Common myeloid progenitor, CD34-positive (primary cell): ENCODE measurements at regions of chr6 and their contacts with region 1.

Region 1: DNA sequence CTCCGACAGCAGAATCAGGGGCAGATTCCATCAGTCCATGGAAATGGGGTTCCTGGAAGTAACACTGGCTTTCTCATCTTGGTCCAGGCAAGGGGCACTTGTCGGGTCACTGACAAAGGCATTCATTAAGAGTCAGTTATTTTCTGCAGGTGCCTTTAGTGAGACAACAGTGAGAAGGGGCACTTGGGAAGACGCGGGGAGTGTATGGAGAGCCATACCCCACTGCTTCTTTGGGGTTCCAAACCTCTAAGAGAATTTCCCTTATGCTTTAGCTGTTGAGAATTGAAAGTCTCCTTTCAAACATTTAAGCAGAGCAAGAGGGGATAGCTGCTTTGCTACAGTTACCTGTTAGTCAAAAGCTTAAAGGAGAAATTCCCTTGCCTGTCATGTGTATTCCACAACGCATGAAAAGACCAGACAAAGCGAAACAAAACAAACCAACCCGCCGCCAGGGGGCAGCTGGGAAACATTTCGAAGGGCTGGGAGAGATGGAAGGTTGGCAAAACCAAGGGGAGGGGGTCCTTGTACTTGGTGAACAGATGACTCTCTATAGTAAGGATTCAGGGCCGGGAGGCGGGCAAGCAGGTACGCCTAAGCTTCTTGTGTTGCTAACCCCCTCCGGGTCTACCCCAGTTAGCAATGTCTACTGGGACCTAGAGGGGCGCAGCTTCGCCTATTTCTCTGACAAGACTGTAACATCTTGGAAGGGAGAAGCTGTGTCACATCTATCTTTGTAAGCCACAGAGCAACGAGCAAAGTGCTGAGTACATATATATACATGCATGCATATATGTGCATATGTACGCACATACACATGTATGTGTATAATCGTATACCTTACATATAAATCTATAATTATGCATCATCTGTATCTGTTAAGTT is 474.9 kb upstream of the AGPAT4 start:
- DNase-seq: peak; percentile 70 to 81 (median 73)
- H3K4me3 ChIP-seq: peak overlapping the region in 2 of 7 experiments; percentile 12
- H3K27ac ChIP-seq: peak overlapping the region in 1 of 2 experiments; percentile 7
- H3K4me1 ChIP-seq: peaks cover 0 to 9% (median 2%) of the 10 kb centered on the region in 4 experiments
- H3K27me3 ChIP-seq: no peaks in the 10 kb centered on the region

Region 2: GRCh38 chr6:161418463-161418945 is 330.3 kb before region 1 on chr6:
- CTCF ChIA-PET with region 1: no interaction called
- POLR2A ChIA-PET with region 1: no interaction called
- DNase-seq: peak; percentile 61 to 78 (median 70)
- H3K4me3 ChIP-seq: no peak overlapping the region
- H3K27ac ChIP-seq: no peak overlapping the region
- H3K4me1 ChIP-seq: no peaks in the 10 kb centered on the region
- H3K27me3 ChIP-seq: peaks cover 0 to 10% (median 0%) of the 10 kb centered on the region in 5 experiments

Region 3: GRCh38 chr6:161829291-161829729 is 80.5 kb after region 1 on chr6:
- CTCF ChIA-PET with region 1: interaction called, 12 read pairs
- POLR2A ChIA-PET with region 1: no interaction called
- DNase-seq: peak; percentile 92 to 99 (median 97)
- H3K4me3 ChIP-seq: peak overlapping the region in 1 of 7 experiments; percentile 27
- H3K27ac ChIP-seq: peak overlapping the region; percentile 73 to 93
- H3K4me1 ChIP-seq: peaks cover 13 to 52% (median 45%) of the 10 kb centered on the region in 4 experiments
- H3K27me3 ChIP-seq: no peaks in the 10 kb centered on the region

Region 4: GRCh38 chr6:161836643-161837448 is 88.1 kb after region 1 on chr6:
- CTCF ChIA-PET with region 1: interaction called, 16 read pairs
- POLR2A ChIA-PET with region 1: no interaction called
- DNase-seq: peak in 2 of 3 donors; percentile 47 to 48
- H3K4me3 ChIP-seq: no peak overlapping the region
- H3K27ac ChIP-seq: no peak overlapping the region
- H3K4me1 ChIP-seq: peaks cover 15 to 45% (median 35%) of the 10 kb centered on the region in 4 experiments
- H3K27me3 ChIP-seq: no peaks in the 10 kb centered on the region

Region 5: DNA sequence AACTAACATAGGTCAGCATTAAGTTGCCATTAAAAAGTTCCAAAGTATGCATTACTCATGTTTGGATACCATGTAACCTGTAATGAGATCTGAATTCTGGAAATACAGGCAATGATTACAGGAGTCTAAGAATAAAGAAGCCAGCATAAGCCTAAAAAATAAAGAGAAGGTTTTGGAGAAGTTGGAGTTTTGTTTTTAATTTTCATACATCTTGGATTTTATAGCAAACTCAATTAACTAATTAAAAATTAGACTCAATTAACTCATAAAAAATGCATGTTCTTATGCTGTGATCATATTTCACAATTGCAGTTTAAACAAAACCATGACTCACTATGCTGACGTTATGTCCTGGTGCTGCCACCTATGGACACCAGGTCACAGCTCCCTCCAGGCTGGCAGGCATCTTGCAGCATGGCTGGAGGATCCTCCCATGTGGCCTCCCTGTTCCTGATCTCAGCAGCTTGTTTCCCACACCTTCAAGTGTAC is 173.9 kb after region 1 on chr6:
- CTCF ChIA-PET with region 1: interaction called, 13 read pairs
- POLR2A ChIA-PET with region 1: no interaction called
- DNase-seq: peak; percentile 77 to 88 (median 83)
- H3K4me3 ChIP-seq: no peak overlapping the region
- H3K27ac ChIP-seq: peak overlapping the region; percentile 9 to 54
- H3K4me1 ChIP-seq: peaks cover 8 to 13% (median 9%) of the 10 kb centered on the region in 4 experiments
- H3K27me3 ChIP-seq: no peaks in the 10 kb centered on the region